Calu3 (cell line): ENCODE measurements at regions of chr1 and their contacts with region 1.

Region 1: DNA sequence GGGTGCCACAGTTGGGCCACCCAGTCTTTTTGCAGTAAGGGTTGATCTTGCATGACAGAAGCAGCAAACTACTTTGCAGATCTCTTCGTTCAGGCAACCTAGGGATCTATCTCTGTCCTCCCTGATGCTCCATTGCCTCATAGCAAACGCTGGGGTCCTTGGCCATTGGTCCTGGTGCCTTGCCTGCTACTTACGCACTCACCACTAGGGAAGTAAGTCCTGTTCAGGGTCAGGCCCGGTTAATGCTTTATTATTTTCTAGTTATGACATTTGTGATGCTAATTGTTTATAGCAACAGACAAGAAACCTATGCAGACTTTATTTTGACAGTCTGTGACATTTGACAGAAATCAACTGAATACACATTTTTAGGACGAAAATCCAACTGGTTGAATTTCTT is 326.5 kb upstream of the FMN2 start:
- DNase-seq: no peak
- H3K4me3 Mint-ChIP-seq: no peak overlapping the region
- H3K27ac Mint-ChIP-seq: no peak overlapping the region
- H3K4me1 Mint-ChIP-seq: no peaks in the 10 kb centered on the region
- H3K27me3 Mint-ChIP-seq: no peaks in the 10 kb centered on the region
- CTCF ChIP-seq: no peak

Region 2: GRCh38 chr1:239413916-239414315 is 351.2 kb before region 1 on chr1:
- CTCF ChIA-PET with region 1: no interaction called
- intact Hi-C with region 1: loop called (anchors 5 kb)
- DNase-seq: no peak
- H3K4me3 Mint-ChIP-seq: no peak overlapping the region
- H3K27ac Mint-ChIP-seq: no peak overlapping the region
- H3K4me1 Mint-ChIP-seq: no peaks in the 10 kb centered on the region
- H3K27me3 Mint-ChIP-seq: no peaks in the 10 kb centered on the region
- CTCF ChIP-seq: no peak

Region 3: GRCh38 chr1:239778221-239778813 is 13.2 kb after region 1 on chr1:
- CTCF ChIA-PET with region 1: no interaction called
- intact Hi-C with region 1: no loop called
- DNase-seq: no peak
- H3K4me3 Mint-ChIP-seq: no peak overlapping the region
- H3K27ac Mint-ChIP-seq: no peak overlapping the region
- H3K4me1 Mint-ChIP-seq: peaks cover 12% of the 10 kb centered on the region
- H3K27me3 Mint-ChIP-seq: no peaks in the 10 kb centered on the region
- CTCF ChIP-seq: no peak

Region 4: GRCh38 chr1:239805851-239806772 is 40.9 kb after region 1 on chr1:
- CTCF ChIA-PET with region 1: no interaction called
- intact Hi-C with region 1: no loop called
- DNase-seq: no peak
- H3K4me3 Mint-ChIP-seq: no peak overlapping the region
- H3K27ac Mint-ChIP-seq: no peak overlapping the region
- H3K4me1 Mint-ChIP-seq: peaks cover under 1% of the 10 kb centered on the region
- H3K27me3 Mint-ChIP-seq: no peaks in the 10 kb centered on the region
- CTCF ChIP-seq: no peak